ENCODE measurements at regions of chr2 and their contacts with region 1.

Region 1: GRCh38 chr2:219498280-219499057 is at the start of gene GMPPA:
- DNase-seq: peak; percentile 99
- ATAC-seq: peak; percentile 83
- H3K4me3 ChIP-seq: peak within 1 kb of the TSS; percentile 85
- H3K27ac ChIP-seq: peak within 1 kb of the TSS; percentile 68
- H3K4me1 ChIP-seq: peaks cover 21% of the 10 kb centered on the region
- H3K27me3 ChIP-seq: no peaks in the 10 kb centered on the region
- CTCF ChIP-seq: no peak
- total RNA-seq, gene GMPPA: 78.1 and 85.7 TPM in 2 replicates

Region 2: GRCh38 chr2:219470429-219470828 is 28.0 kb before region 1 on chr2:
- CTCF ChIA-PET with region 1: no interaction called
- POLR2A ChIA-PET with region 1: no interaction called
- intact Hi-C with region 1: no loop called
- DNase-seq: no peak
- ATAC-seq: no peak
- H3K4me3 ChIP-seq: no peak overlapping the region
- H3K27ac ChIP-seq: no peak overlapping the region
- H3K4me1 ChIP-seq: peaks cover 15% of the 10 kb centered on the region; the same call in 1 of the 2 replicates
- H3K27me3 ChIP-seq: no peaks in the 10 kb centered on the region
- CTCF ChIP-seq: no peak

Region 3: GRCh38 chr2:219521066-219521880 is 22.8 kb after region 1 on chr2:
- CTCF ChIA-PET with region 1: interaction called, 12 read pairs
- POLR2A ChIA-PET with region 1: no interaction called
- intact Hi-C with region 1: no loop called
- DNase-seq: peak; percentile 61
- ATAC-seq: peak; percentile 79
- H3K4me3 ChIP-seq: peak overlapping the region; percentile 44; the same call in 1 of the 2 replicates
- H3K27ac ChIP-seq: no peak overlapping the region
- H3K4me1 ChIP-seq: peaks cover 14% of the 10 kb centered on the region
- H3K27me3 ChIP-seq: no peaks in the 10 kb centered on the region
- CTCF ChIP-seq: peak; percentile 91

Region 4: GRCh38 chr2:219912491-219912921 is 414.0 kb after region 1 on chr2:
- CTCF ChIA-PET with region 1: no interaction called
- POLR2A ChIA-PET with region 1: no interaction called
- intact Hi-C with region 1: no loop called
- DNase-seq: no peak
- ATAC-seq: no peak
- H3K4me3 ChIP-seq: no peak overlapping the region
- H3K27ac ChIP-seq: no peak overlapping the region
- H3K4me1 ChIP-seq: no peaks in the 10 kb centered on the region
- H3K27me3 ChIP-seq: no peaks in the 10 kb centered on the region
- CTCF ChIP-seq: no peak

Region 5: DNA sequence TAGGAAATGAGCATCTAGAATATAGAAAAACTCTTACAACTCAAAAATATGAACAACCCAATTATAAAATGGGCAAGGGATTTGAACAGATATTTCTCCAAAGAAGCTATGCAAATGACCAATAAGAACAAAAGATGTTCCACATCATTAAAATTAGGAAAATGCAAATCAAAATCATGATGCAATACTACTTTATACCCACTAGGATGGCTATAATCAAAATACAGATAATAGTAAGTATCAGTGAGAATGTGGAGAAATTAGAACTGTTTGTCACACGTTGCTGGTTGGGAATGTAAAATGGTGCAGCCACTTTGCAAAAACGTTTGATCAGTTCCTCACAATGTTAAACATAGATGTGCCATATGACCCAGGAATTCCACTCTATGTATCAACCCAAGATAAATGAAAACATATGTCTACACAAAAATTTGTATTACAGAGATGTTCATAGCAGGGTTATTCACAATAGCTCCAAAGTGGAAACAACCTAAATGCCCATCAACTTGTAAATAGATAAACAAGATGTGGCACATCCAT is 687.4 kb after region 1 on chr2:
- CTCF ChIA-PET with region 1: no interaction called
- POLR2A ChIA-PET with region 1: no interaction called
- intact Hi-C with region 1: no loop called
- DNase-seq: no peak
- ATAC-seq: no peak
- H3K4me3 ChIP-seq: no peak overlapping the region
- H3K27ac ChIP-seq: no peak overlapping the region
- H3K4me1 ChIP-seq: peaks cover 26% of the 10 kb centered on the region
- H3K27me3 ChIP-seq: no peaks in the 10 kb centered on the region
- CTCF ChIP-seq: no peak

Measured in PC-3 (cell line).